ENCODE measurements at regions of chr19 and their contacts with region 1.

Region 1: DNA sequence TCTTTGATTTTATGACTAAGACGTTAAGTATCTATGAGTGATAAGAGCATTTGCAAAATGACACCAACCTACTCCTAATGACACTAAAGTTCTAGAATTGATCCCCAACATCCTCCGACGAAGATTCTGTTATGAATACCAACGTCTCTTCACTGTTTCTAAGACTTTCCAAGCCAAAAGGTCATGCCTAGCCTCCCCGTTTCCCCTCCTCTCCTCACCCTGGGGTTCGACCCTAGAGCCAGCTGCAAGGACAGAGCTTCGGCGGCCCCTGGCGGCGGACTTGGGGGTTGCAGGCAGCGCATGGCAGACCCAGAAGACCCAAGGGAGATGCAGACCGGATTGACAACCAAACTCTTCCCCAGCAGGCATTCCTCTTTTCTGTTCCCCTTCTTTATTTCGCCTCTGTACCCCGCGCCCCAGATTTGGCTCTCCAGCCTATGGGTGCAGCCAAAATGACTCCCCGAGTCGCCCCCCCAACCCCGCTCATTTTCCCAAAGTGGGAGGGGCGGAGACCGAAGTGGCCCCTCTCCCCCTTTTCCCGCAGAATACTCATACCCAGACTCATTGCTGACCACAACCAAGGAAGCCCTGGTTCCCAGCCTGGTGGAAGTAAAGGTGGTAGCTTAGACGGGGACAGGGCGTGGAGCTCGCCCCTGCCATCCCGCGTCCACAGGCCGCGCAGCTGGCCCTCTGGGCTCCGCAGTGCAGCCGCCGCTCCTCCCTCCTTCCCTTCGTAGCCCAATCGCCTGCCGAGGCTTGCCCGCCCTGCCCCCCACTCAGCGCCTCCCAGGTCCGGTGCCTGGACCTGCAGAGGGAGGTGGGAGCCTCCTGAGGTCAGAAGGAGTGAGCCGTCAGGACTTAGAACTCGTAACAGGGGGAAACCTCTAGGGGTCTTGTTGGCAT is 4.1 kb upstream of the EML2 start:
- DNase-seq: peak; percentile 90
- H3K4me3 Mint-ChIP-seq: peak overlapping the region; percentile 64
- H3K27ac Mint-ChIP-seq: peak overlapping the region; percentile 100
- H3K4me1 Mint-ChIP-seq: peaks cover 62% of the 10 kb centered on the region
- H3K27me3 Mint-ChIP-seq: no peaks in the 10 kb centered on the region

Region 2: DNA sequence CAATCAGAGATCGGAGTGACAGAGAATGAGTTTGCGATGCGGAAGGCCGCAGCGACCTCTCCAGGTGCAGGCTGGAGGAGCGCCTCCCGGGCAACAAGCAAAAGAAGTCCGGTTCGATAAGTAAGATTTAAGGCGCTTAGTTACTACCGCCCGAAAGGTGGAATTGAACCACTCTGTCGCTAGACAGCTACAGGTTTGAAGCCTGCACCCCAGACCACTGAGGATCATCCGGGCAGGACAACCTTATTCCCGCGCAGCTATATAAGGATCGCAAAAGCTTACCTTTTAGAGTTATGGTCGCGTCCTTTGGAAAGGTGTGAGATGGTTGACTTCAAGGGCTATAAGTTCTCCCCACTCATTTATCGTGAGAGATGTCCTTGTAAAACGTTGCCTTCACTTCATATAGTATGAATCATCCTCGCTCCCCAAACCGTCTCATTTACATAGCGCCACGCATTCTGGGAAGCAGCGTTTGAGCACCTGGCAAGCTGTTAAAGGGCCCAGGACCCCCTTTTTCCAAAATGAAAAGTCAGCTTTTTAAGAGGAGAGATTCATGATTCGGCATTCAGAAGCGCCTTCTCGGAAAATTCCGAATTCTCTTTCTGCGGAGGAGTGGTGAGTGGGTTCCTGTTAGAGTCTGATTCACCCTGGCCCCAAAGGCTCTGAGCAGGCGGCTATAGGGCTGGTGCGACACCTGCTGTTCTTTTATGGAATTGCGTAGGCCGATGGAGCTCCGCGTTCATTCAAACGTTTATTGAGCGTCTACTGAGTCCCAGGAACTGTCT is 164.6 kb before region 1 on chr19:
- CTCF ChIA-PET with region 1: interaction called, 28 read pairs
- POLR2A ChIA-PET with region 1: interaction called, 6 read pairs
- DNase-seq: peak; percentile 94
- H3K4me3 Mint-ChIP-seq: peak overlapping the region; percentile 61
- H3K27ac Mint-ChIP-seq: peak overlapping the region; percentile 94
- H3K4me1 Mint-ChIP-seq: peaks cover 41% of the 10 kb centered on the region
- H3K27me3 Mint-ChIP-seq: peaks cover 10% of the 10 kb centered on the region

Region 3: GRCh38 chr19:45506246-45506990 is 136.9 kb before region 1 on chr19:
- CTCF ChIA-PET with region 1: interaction called, 13 read pairs
- POLR2A ChIA-PET with region 1: interaction called, 24 read pairs
- DNase-seq: peak; percentile 97
- H3K4me3 Mint-ChIP-seq: peak overlapping the region; percentile 83
- H3K27ac Mint-ChIP-seq: peak overlapping the region; percentile 96
- H3K4me1 Mint-ChIP-seq: peaks cover 47% of the 10 kb centered on the region
- H3K27me3 Mint-ChIP-seq: no peaks in the 10 kb centered on the region

Region 4: GRCh38 chr19:45591004-45591637 is 52.2 kb before region 1 on chr19:
- CTCF ChIA-PET with region 1: interaction called, 23 read pairs
- POLR2A ChIA-PET with region 1: interaction called, 6 read pairs
- DNase-seq: peak; percentile 55
- H3K4me3 Mint-ChIP-seq: no peak overlapping the region
- H3K27ac Mint-ChIP-seq: no peak overlapping the region
- H3K4me1 Mint-ChIP-seq: peaks cover 18% of the 10 kb centered on the region
- H3K27me3 Mint-ChIP-seq: peaks cover 34% of the 10 kb centered on the region

Region 5: GRCh38 chr19:45632468-45633196 is 10.6 kb before region 1 on chr19:
- CTCF ChIA-PET with region 1: interaction called, 17 read pairs
- POLR2A ChIA-PET with region 1: interaction called, 21 read pairs
- DNase-seq: peak; percentile 56
- H3K4me3 Mint-ChIP-seq: no peak overlapping the region
- H3K27ac Mint-ChIP-seq: no peak overlapping the region
- H3K4me1 Mint-ChIP-seq: peaks cover 25% of the 10 kb centered on the region
- H3K27me3 Mint-ChIP-seq: no peaks in the 10 kb centered on the region

Region 6: DNA sequence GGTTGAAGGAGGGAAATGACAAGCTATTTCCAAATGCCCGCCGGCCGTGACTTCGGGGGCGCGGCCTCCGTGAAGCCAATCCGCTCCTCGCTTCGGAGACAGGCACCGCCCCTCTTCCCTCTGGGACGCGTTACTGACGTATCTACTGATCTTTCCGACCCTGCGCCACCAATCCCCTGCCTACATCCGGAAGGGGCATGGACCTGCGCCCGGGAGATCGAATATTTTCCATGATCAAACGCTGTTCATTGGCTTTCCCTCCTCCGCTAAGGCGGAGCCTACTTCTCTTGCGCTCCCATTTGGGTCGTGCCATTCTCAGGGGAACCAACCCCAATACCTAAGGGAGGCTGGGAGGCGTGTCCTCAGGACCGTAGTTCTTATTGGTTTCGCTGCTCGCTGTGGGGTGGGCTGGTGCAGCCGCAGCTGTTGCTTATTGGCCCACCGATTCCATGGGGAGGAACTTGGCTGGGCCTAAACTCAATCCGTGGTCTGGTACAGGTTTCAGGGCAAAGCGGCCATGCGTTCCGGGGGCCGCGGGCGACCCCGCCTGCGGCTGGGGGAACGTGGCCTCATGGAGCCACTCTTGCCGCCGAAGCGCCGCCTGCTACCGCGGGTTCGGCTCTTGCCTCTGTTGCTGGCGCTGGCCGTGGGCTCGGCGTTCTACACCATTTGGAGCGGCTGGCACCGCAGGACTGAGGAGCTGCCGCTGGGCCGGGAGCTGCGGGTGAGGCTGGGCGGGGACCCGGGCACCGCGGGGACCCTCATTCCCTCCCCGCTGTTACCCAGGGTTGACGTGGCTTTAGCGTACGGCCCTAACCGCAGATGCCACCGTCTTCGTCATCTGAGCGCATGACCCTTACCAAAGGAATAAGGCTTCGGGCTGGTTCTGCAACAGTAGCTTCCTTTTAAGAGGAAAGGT is 49.2 kb after region 1 on chr19 and contains the start of gene QPCTL:
- CTCF ChIA-PET with region 1: interaction called, 28 read pairs
- POLR2A ChIA-PET with region 1: interaction called, 18 read pairs
- DNase-seq: peak; percentile 98
- H3K4me3 Mint-ChIP-seq: peak within 1 kb of the TSS; percentile 90
- H3K27ac Mint-ChIP-seq: peak within 1 kb of the TSS; percentile 89
- H3K4me1 Mint-ChIP-seq: peaks cover 29% of the 10 kb centered on the region
- H3K27me3 Mint-ChIP-seq: no peaks in the 10 kb centered on the region
- total RNA-seq, gene QPCTL: 9.1 to 11.9 TPM

Region 7: DNA sequence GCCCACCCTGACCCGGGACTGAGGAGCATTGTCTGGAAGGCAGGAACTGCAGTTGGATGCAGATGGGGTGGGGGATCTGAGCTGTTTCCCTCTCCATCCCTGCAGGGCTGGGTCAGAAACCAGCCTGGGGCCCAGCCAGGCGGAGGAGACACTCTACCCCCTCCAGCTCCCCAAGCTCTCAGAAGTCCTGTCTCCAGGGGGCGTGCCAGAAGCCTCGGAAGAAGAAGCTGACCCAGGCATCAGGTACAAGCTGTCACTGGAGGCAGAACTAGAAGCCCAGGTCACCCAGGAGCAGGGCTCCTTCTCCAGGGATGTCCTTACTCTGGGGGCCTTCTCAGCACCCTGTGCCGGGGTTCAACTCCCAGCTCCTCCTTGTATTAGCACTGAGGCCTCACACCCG is 110.3 kb after region 1 on chr19:
- CTCF ChIA-PET with region 1: no interaction called
- POLR2A ChIA-PET with region 1: no interaction called
- DNase-seq: no peak
- H3K4me3 Mint-ChIP-seq: no peak overlapping the region
- H3K27ac Mint-ChIP-seq: no peak overlapping the region
- H3K4me1 Mint-ChIP-seq: no peaks in the 10 kb centered on the region
- H3K27me3 Mint-ChIP-seq: no peaks in the 10 kb centered on the region